HCT116 (cell line): ENCODE measurements at regions of chr3 and their contacts with region 1.

Region 1: DNA sequence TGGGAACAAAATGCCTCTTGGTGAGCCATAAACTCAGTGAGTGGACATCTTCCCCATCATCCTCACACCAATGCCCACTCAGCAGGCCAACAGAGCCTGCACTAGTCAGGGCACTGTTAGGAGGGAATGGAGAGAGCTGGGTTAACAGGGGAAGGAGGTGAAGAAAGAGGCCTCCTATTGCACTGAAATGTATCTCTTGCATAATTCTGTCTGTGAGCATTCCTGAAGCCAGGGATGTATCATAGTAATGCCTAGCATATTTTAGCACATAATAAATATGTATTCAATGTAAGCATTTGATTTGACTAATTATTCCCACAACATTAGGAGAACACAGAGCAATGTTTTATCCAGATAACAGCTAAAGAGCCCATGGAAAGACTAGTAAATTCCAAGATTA is 81.2 kb downstream of the ANO10 start:
- DNase-seq: no peak
- ATAC-seq: no peak
- H3K4me3 ChIP-seq: no peak overlapping the region
- H3K27ac ChIP-seq: no peak overlapping the region
- H3K4me1 ChIP-seq: no peaks in the 10 kb centered on the region
- H3K27me3 ChIP-seq: no peaks in the 10 kb centered on the region
- CTCF ChIP-seq: no peak
- POLR2A ChIP-seq: no peak
- RAD21 ChIP-seq: no peak

Region 2: GRCh38 chr3:43468133-43468532 is 72.5 kb before region 1 on chr3:
- CTCF ChIA-PET with region 1: no interaction called
- POLR2A ChIA-PET with region 1: no interaction called
- RAD21 ChIA-PET with region 1: no interaction called
- intact Hi-C with region 1: no loop called
- DNase-seq: no peak
- ATAC-seq: no peak
- H3K4me3 ChIP-seq: no peak overlapping the region
- H3K27ac ChIP-seq: no peak overlapping the region
- H3K4me1 ChIP-seq: no peaks in the 10 kb centered on the region
- H3K27me3 ChIP-seq: no peaks in the 10 kb centered on the region
- CTCF ChIP-seq: no peak
- POLR2A ChIP-seq: no peak
- RAD21 ChIP-seq: no peak

Region 3: GRCh38 chr3:43638594-43639447 is 98.2 kb after region 1 on chr3:
- CTCF ChIA-PET with region 1: interaction called, 3 read pairs
- POLR2A ChIA-PET with region 1: no interaction called
- RAD21 ChIA-PET with region 1: no interaction called
- intact Hi-C with region 1: loop called (anchors 2 kb)
- DNase-seq: peak; percentile 58
- ATAC-seq: peak; percentile 85
- H3K4me3 ChIP-seq: peak overlapping the region; percentile 2 to 36; a peak in 3 of 4 replicates
- H3K27ac ChIP-seq: peak overlapping the region; percentile 40
- H3K4me1 ChIP-seq: peaks cover 12 to 21% of the 10 kb centered on the region in 2 experiments
- H3K27me3 ChIP-seq: no peaks in the 10 kb centered on the region
- CTCF ChIP-seq: peak; percentile 53 to 72 (median 64); a peak in 5 of 6 replicates
- POLR2A ChIP-seq: no peak
- RAD21 ChIP-seq: peak; percentile 80

Region 4: GRCh38 chr3:43759297-43759782 is 218.7 kb after region 1 on chr3:
- CTCF ChIA-PET with region 1: no interaction called
- POLR2A ChIA-PET with region 1: no interaction called
- RAD21 ChIA-PET with region 1: no interaction called
- intact Hi-C with region 1: loop called (anchors 2 kb)
- DNase-seq: no peak
- ATAC-seq: peak; percentile 88
- H3K4me3 ChIP-seq: no peak overlapping the region
- H3K27ac ChIP-seq: no peak overlapping the region
- H3K4me1 ChIP-seq: peaks cover 0 to 13% of the 10 kb centered on the region in 2 experiments; a peak in 2 of 4 replicates
- H3K27me3 ChIP-seq: no peaks in the 10 kb centered on the region
- CTCF ChIP-seq: peak; percentile 10 to 40 (median 31); a peak in 4 of 6 replicates
- POLR2A ChIP-seq: no peak
- RAD21 ChIP-seq: peak; percentile 67

Region 5: DNA sequence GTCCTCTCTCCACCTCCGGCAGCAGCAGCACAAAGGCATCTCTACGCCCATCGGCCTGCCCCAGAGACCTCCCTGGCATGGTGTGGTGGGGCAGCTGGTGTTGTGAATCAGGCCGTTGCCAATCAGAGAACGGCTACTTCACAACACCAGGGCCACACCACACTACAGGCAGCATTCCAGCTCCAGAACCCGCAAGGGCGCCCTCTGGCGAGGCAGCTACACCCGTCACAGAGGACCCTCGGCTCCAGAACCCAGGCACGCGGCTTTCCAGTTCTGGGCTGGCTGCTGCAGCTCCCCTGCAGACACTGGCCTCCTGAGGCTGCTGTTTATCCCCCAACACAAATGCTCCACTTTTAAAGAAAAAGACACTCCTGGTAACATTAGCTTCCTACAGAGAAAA is 573.5 kb after region 1 on chr3:
- CTCF ChIA-PET with region 1: interaction called, 4 read pairs
- POLR2A ChIA-PET with region 1: no interaction called
- RAD21 ChIA-PET with region 1: no interaction called
- intact Hi-C with region 1: loop called (anchors 5 kb)
- DNase-seq: peak; percentile 42
- ATAC-seq: peak; percentile 99
- H3K4me3 ChIP-seq: no peak overlapping the region
- H3K27ac ChIP-seq: no peak overlapping the region
- H3K4me1 ChIP-seq: peaks cover 0 to 11% of the 10 kb centered on the region in 2 experiments; a peak in 3 of 4 replicates
- H3K27me3 ChIP-seq: peaks cover 6% of the 10 kb centered on the region; the same call in 1 of the 2 replicates
- CTCF ChIP-seq: peak; percentile 61 to 85 (median 72); a peak in 5 of 6 replicates
- POLR2A ChIP-seq: no peak
- RAD21 ChIP-seq: peak; percentile 69

Region 6: GRCh38 chr3:44235604-44236484 is 695.2 kb after region 1 on chr3:
- CTCF ChIA-PET with region 1: no interaction called
- POLR2A ChIA-PET with region 1: no interaction called
- RAD21 ChIA-PET with region 1: no interaction called
- intact Hi-C with region 1: loop called (anchors 1 kb)
- DNase-seq: peak; percentile 79
- ATAC-seq: peak; percentile 92
- H3K4me3 ChIP-seq: no peak overlapping the region
- H3K27ac ChIP-seq: no peak overlapping the region
- H3K4me1 ChIP-seq: peaks cover 2 to 11% of the 10 kb centered on the region in 2 experiments; a peak in 2 of 4 replicates
- H3K27me3 ChIP-seq: no peaks in the 10 kb centered on the region
- CTCF ChIP-seq: peak; percentile 61 to 80 (median 68); a peak in 5 of 6 replicates
- POLR2A ChIP-seq: no peak
- RAD21 ChIP-seq: peak; percentile 60